ENCODE measurements at regions of chr4 and their contacts with region 1.

Region 1: DNA sequence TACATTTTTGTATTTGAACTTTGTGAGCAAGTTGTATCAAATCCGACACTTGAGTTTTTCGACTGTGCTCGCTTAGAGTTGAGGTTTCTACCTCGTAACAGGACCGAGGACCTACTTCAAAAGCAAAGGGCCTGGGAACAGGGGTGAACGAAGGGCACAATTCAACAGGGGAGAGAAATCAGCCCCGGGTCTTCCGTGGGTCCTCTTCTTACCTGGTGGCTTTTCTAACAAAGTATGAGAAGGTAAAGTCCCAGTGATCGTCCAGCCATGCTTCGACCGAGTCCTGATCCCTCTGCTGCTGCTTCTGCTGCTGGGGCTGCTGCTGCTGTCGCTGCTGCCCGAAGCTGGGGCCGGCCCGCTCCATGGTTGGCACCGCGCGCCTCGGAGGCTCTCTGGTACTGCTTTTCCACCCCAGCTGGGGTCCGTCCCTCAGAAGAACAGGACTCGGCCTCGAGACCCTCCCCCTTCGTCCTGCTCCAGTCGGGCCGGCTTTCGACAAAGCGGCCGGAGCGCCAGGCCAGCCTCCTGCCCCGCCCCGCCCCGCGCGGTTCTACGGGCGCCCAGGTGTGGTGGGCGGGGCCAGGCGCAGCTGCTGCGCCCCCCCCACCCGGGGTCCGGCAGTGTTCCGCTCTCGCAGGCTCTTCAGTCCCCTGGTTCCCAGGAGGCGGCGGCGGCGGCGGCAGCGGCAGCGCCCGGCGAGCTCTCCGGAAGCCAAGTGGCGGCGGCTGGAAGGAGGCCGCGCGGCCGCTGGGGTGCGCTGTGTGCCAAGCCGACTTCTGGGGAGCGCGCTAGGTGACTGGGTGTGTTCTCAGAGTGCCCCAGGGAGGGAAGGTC is at the start of gene PDE5A:
- DNase-seq: peak; percentile 95
- H3K4me3 ChIP-seq: peak within 1 kb of the TSS; percentile 70 to 94 (median 92)
- H3K27ac ChIP-seq: peak within 1 kb of the TSS; percentile 90 to 97 (median 94)
- H3K4me1 ChIP-seq: peaks cover 8 to 29% (median 22%) of the 10 kb centered on the region in 4 donors
- H3K27me3 ChIP-seq: no peaks in the 10 kb centered on the region
- CTCF ChIP-seq: peak; percentile 84 to 91 (median 86)
- EP300 ChIP-seq: no peak
- POLR2A ChIP-seq: no peak
- total RNA-seq, gene PDE5A: 154 to 208 (median 199) TPM

Region 2: GRCh38 chr4:119559044-119559647 is 69.4 kb before region 1 on chr4:
- intact Hi-C with region 1: loop called (anchors 1 kb)
- DNase-seq: no peak
- H3K4me3 ChIP-seq: no peak overlapping the region
- H3K27ac ChIP-seq: peak overlapping the region in 3 of 4 donors; percentile 11 to 43 (median 38)
- H3K4me1 ChIP-seq: peaks cover 0 to 41% (median 29%) of the 10 kb centered on the region in 4 donors
- H3K27me3 ChIP-seq: no peaks in the 10 kb centered on the region
- CTCF ChIP-seq: peak; percentile 55 to 57 (median 56)
- EP300 ChIP-seq: no peak
- POLR2A ChIP-seq: no peak

Region 3: DNA sequence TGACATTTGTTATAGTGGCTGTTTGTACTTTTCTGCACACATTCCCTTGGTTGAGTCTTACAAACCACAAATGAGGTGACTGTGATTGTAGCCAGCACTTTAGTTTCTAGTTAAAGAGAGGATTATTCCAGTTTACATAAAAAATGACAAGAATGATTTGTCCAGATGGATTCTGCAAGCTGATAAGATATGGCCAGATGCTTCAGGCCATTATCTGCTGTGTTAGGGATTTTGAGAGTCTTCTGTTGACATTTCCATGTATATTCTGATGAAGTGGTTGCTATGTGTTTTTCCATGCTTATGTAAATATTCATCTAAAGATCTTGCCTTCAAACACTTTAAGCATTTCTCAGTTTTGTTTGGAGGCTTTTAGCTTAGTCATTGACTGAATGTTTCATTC is 31.1 kb after region 1 on chr4:
- intact Hi-C with region 1: loop called (anchors 5 kb)
- DNase-seq: no peak
- H3K4me3 ChIP-seq: no peak overlapping the region
- H3K27ac ChIP-seq: no peak overlapping the region
- H3K4me1 ChIP-seq: peaks cover 0 to 34% (median 27%) of the 10 kb centered on the region in 4 donors
- H3K27me3 ChIP-seq: no peaks in the 10 kb centered on the region
- CTCF ChIP-seq: no peak
- EP300 ChIP-seq: no peak
- POLR2A ChIP-seq: no peak

Region 4: GRCh38 chr4:119785963-119786362 is 157.4 kb after region 1 on chr4:
- intact Hi-C with region 1: loop called (anchors 2 kb)
- DNase-seq: no peak
- H3K4me3 ChIP-seq: no peak overlapping the region
- H3K27ac ChIP-seq: no peak overlapping the region
- H3K4me1 ChIP-seq: peaks cover 0 to 7% (median 0%) of the 10 kb centered on the region in 4 donors
- H3K27me3 ChIP-seq: no peaks in the 10 kb centered on the region
- CTCF ChIP-seq: peak; percentile 20 to 45 (median 25)
- EP300 ChIP-seq: no peak
- POLR2A ChIP-seq: no peak

Measured in esophagus muscularis mucosa (tissue), 4 donors.